Dorsolateral prefrontal cortex (tissue), 120 donors: ENCODE measurements at regions of chr3 and their contacts with region 1.

Region 1: DNA sequence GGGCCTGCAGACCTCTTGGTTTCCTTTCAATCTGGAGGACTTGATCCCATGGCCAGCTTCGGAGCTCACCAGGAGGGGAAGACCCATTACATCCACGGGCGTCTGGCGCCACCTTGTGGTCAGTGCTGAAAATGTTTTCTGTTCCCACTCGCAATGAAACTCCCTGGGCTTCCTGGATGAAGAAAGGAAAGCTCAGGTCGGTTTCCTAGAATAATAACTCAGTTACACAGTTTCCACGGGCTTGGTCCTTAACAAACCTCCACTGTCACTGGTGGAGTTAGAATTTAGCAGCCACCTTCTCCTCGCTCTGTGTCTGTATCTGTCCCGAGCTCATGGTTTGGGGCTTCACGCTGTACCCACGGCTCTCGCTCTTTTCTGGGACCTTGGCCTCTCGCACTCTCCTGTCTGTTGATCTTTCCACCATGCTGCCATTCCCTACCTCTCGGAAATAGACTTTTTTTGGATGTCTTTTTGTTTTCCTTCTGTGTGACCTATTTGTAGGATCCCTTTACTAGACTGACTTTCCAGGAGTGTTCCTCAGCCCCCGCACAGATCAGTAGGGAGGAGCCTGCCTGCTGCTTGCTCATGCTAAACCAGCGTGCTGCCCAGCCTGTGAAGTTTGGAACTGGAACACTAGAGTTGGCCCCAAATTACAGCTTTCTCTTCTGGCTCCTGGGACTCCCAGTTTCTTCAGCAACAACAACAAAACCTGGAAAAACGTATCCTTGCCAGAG is 56.3 kb downstream of the IL20RB start:
- DNase-seq: peak; percentile 86 to 95 (median 92)
- H3K4me3 ChIP-seq: peak overlapping the region; percentile 11 to 71 (median 53)
- H3K27ac ChIP-seq: peak overlapping the region in 28 of 59 donors; percentile 1 to 83 (median 42)
- H3K27me3 ChIP-seq: no peaks in the 10 kb centered on the region
- CTCF ChIP-seq: peak; percentile 89 to 99 (median 96)

Region 2: DNA sequence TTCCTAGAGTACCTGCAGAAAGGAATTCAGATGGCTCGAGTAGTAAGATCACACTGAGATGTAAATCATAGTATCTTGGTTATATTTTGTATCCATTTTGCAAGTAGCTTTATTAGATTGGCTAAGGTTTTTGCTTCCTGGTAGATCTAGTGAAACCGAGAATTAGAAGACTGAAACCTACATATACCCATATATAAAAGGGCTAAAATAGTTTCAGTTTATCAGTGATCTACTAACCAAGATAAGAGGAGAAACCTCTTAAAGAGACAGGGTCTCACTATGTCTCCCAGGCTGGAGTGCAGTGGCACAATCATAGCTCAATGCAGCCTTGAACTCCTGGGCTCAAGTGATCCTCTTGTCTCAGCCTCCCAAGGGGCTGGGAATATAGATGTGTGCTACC is 628.7 kb before region 1 on chr3:
- intact Hi-C with region 1: loop called in 1 of 2 experiments (anchors 10 kb)
- DNase-seq: no peak
- H3K4me3 ChIP-seq: no peak overlapping the region
- H3K27ac ChIP-seq: no peak overlapping the region
- H3K27me3 ChIP-seq: no peaks in the 10 kb centered on the region
- CTCF ChIP-seq: no peak

Region 3: GRCh38 chr3:136545664-136546268 is 468.4 kb before region 1 on chr3:
- intact Hi-C with region 1: loop called in 1 of 2 experiments (anchors 2 kb)
- DNase-seq: no peak
- H3K4me3 ChIP-seq: peak overlapping the region in 1 of 59 donors; percentile 25
- H3K27ac ChIP-seq: peak overlapping the region in 47 of 59 donors; percentile 1 to 77 (median 55)
- H3K27me3 ChIP-seq: no peaks in the 10 kb centered on the region
- CTCF ChIP-seq: peak in 55 of 56 donors; percentile 6 to 87 (median 59)

Region 4: GRCh38 chr3:136949708-136950107 is 64.4 kb before region 1 on chr3:
- intact Hi-C with region 1: loop called (anchors 5 kb)
- DNase-seq: no peak
- H3K4me3 ChIP-seq: no peak overlapping the region
- H3K27ac ChIP-seq: no peak overlapping the region
- H3K27me3 ChIP-seq: no peaks in the 10 kb centered on the region
- CTCF ChIP-seq: peak in 39 of 56 donors; percentile 10 to 55 (median 31)